ENCODE measurements at regions of chrX and their contacts with region 1.

Region 1: DNA sequence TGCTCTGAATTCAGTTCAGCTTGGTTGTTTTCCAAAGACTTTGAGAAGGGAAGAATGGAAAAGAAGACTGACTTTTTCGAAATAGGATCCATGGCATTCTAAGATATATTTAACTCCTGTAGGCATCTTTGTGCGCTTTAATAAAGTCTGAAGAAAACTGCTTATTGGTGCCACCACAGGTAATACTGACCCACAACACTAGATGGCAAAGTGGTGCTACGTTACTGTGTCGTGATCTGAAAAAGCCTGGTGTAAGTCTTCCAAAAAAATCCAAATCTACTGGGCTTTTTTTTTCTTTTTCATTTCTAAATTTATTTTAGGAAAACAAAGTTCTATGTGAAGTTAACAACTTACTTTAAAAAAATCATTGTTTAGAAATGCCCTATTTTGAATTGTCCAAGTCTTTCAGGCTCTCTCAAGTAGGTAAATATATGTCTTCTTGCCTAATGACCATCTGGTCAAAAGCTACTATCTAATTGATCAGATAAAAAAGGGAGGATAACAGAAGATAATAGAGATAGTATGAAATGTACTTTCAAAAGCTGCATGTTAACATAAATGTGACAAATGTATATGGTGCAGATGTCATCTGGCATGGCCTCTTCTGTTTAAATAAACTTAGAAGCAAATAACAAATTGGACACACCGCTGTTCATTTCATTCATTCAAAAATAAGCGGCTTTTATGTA is 47.0 kb upstream of the MID1IP1 start:
- DNase-seq: peak; percentile 58
- H3K4me3 Mint-ChIP-seq: no peak overlapping the region
- H3K27ac Mint-ChIP-seq: no peak overlapping the region
- H3K4me1 Mint-ChIP-seq: no peaks in the 10 kb centered on the region
- H3K27me3 Mint-ChIP-seq: peaks cover 73% of the 10 kb centered on the region
- CTCF ChIP-seq: peak; percentile 68

Region 2: DNA sequence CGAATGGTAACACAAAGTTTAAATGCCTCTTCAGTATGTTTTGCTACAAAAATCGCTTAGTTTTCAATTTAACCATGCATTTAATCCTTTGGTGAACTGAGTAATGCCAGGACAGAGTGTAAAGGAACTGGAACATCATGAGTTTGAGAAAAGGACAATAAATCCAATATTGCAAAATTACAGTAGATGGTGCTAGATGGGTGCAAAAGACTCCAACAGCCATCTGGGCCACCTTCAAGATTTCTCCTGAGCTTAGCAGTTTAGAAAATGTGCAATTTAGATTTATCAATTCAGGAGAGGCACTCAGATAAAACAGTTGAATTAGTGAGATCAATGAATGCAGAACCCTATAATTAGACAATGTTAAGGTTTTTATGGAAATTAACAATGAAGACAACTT is 13.8 kb after region 1 on chrX:
- CTCF ChIA-PET with region 1: interaction called, 10 read pairs
- POLR2A ChIA-PET with region 1: no interaction called
- intact Hi-C with region 1: no loop called
- DNase-seq: peak; percentile 35
- H3K4me3 Mint-ChIP-seq: no peak overlapping the region
- H3K27ac Mint-ChIP-seq: no peak overlapping the region
- H3K4me1 Mint-ChIP-seq: no peaks in the 10 kb centered on the region
- H3K27me3 Mint-ChIP-seq: peaks cover 40% of the 10 kb centered on the region
- CTCF ChIP-seq: peak; percentile 48

Region 3: GRCh38 chrX:39149761-39150160 is 395.5 kb after region 1 on chrX:
- CTCF ChIA-PET with region 1: interaction called, 4 read pairs
- POLR2A ChIA-PET with region 1: no interaction called
- intact Hi-C with region 1: loop called (anchors 1 kb)
- DNase-seq: peak; percentile 62
- H3K4me3 Mint-ChIP-seq: no peak overlapping the region
- H3K27ac Mint-ChIP-seq: no peak overlapping the region
- H3K4me1 Mint-ChIP-seq: no peaks in the 10 kb centered on the region
- H3K27me3 Mint-ChIP-seq: peaks cover 59% of the 10 kb centered on the region
- CTCF ChIP-seq: peak; percentile 71

Region 4: GRCh38 chrX:40266490-40267333 is 1512.5 kb after region 1 on chrX:
- CTCF ChIA-PET with region 1: no interaction called
- POLR2A ChIA-PET with region 1: no interaction called
- intact Hi-C with region 1: loop called (anchors 10 kb)
- DNase-seq: peak; percentile 44
- H3K4me3 Mint-ChIP-seq: peak overlapping the region; percentile 54
- H3K27ac Mint-ChIP-seq: no peak overlapping the region
- H3K4me1 Mint-ChIP-seq: peaks cover 7% of the 10 kb centered on the region
- H3K27me3 Mint-ChIP-seq: peaks cover 11% of the 10 kb centered on the region
- CTCF ChIP-seq: peak; percentile 57

Measured in MCF 10A (cell line).